Activated naive CD4-positive, alpha-beta T cell treated with anti-CD3 and anti-CD28 coated beads for 36 hours (primary cell): ENCODE measurements at regions of chr5 and their contacts with region 1.

Region 1: GRCh38 chr5:134577796-134578363 is 52.4 kb downstream of the JADE2 start:
- DNase-seq: peak; percentile 91
- H3K4me3 Mint-ChIP-seq: no peak overlapping the region
- H3K27ac Mint-ChIP-seq: peak overlapping the region; percentile 69
- H3K4me1 Mint-ChIP-seq: peaks cover 15% of the 10 kb centered on the region
- H3K27me3 Mint-ChIP-seq: no peaks in the 10 kb centered on the region

Region 2: DNA sequence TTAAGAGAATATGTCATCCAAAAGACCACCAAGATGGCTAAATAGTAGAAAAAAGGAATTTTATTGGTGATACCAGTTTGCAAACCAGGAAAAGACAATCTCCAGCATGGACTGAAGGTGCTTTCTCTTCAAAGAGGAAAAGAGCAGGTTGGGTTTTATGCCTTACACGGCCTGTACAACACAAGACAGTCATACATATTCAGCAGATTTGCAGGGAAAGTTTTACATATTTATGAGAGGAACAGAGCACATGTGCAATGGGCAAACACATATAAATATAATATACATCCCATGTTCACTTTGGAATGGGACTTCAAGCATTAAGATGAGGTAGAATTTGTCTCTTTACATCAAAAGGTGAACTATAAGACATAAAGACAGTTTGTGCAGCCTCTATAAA is 281.7 kb before region 1 on chr5:
- CTCF ChIA-PET with region 1: interaction called, 10 read pairs
- intact Hi-C with region 1: no loop called
- DNase-seq: no peak
- H3K4me3 Mint-ChIP-seq: no peak overlapping the region
- H3K27ac Mint-ChIP-seq: no peak overlapping the region
- H3K4me1 Mint-ChIP-seq: no peaks in the 10 kb centered on the region
- H3K27me3 Mint-ChIP-seq: no peaks in the 10 kb centered on the region

Region 3: GRCh38 chr5:134304311-134304710 is 273.6 kb before region 1 on chr5:
- CTCF ChIA-PET with region 1: interaction called, 13 read pairs
- intact Hi-C with region 1: loop called (anchors 2 kb)
- DNase-seq: no peak
- H3K4me3 Mint-ChIP-seq: no peak overlapping the region
- H3K27ac Mint-ChIP-seq: no peak overlapping the region
- H3K4me1 Mint-ChIP-seq: peaks cover 6% of the 10 kb centered on the region
- H3K27me3 Mint-ChIP-seq: no peaks in the 10 kb centered on the region